Activated CD4-positive, alpha-beta T cell treated with anti-CD3 and anti-CD28 coated beads, Interleukin-2, amount 10 ng/mL, durations not matched to agents 7 days and 5 days (primary cell): ENCODE measurements at regions of chr19 and their contacts with region 1.

Region 1: GRCh38 chr19:43668406-43669158 is 1.4 kb downstream of the PLAUR start:
- DNase-seq: peak; percentile 98
- H3K4me3 Mint-ChIP-seq: peak overlapping the region; percentile 79
- H3K27ac Mint-ChIP-seq: peak overlapping the region; percentile 87
- H3K4me1 Mint-ChIP-seq: peaks cover 50% of the 10 kb centered on the region
- H3K27me3 Mint-ChIP-seq: peaks cover 7% of the 10 kb centered on the region

Region 2: GRCh38 chr19:43589277-43589676 is 79.3 kb before region 1 on chr19:
- CTCF ChIA-PET with region 1: no interaction called
- POLR2A ChIA-PET with region 1: no interaction called
- DNase-seq: no peak
- H3K4me3 Mint-ChIP-seq: no peak overlapping the region
- H3K27ac Mint-ChIP-seq: no peak overlapping the region
- H3K4me1 Mint-ChIP-seq: peaks cover 28% of the 10 kb centered on the region
- H3K27me3 Mint-ChIP-seq: no peaks in the 10 kb centered on the region

Region 3: GRCh38 chr19:43678512-43679261 is 10.1 kb after region 1 on chr19:
- CTCF ChIA-PET with region 1: interaction called, 21 read pairs
- POLR2A ChIA-PET with region 1: no interaction called
- DNase-seq: no peak
- H3K4me3 Mint-ChIP-seq: no peak overlapping the region
- H3K27ac Mint-ChIP-seq: no peak overlapping the region
- H3K4me1 Mint-ChIP-seq: peaks cover 19% of the 10 kb centered on the region
- H3K27me3 Mint-ChIP-seq: no peaks in the 10 kb centered on the region